KBM-7 (cell line): ENCODE measurements at regions of chr2 and their contacts with region 1.

Region 1: DNA sequence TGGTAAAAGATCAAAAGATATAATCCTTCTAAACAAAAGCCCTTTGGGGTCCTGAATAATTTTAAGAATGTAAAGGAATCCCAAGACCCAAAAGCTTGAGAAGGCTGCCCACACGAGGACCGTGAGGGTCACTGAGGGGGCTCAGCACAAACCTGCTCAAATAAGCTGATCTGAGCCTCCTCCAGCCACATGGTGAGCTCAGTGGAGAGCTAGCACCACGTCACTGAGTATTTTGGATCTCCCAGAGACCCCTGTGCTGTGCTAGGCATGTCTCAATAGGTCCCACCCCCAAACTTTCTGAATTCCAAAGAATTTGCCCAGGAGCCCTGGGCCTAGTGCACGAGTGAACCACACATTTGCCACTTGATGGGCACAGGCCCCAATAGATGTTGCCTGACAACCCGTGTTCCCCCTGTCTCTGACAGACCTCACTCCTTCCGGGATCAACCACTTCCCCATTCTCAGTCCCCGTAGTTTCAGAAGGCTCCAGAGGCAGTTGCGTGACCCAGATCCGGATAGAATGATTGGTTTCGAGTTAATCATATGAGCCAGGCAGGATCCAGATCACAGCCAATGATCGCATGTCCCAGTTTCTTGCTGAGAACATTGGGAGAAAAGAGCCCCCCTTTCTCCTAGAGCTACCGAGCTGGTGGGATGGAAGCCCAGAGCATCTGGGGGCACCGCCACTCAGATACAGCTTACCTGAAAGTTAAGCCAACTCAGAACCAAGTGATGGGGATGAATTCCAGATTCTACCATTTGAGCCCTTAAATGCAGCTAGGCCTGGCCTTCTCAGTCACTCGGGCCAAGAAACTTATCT is 203.8 kb downstream of the TNS1 start:
- DNase-seq: peak; percentile 92

Region 2: GRCh38 chr2:217851191-217852020 is 52.5 kb after region 1 on chr2:
- in situ Hi-C with region 1: no loop called
- DNase-seq: peak; percentile 57

Region 3: GRCh38 chr2:217899231-217900009 is 100.5 kb after region 1 on chr2:
- in situ Hi-C with region 1: loop called (anchors 10 kb)
- DNase-seq: peak; percentile 68

Region 4: GRCh38 chr2:218063486-218063885 is 264.5 kb after region 1 on chr2:
- in situ Hi-C with region 1: no loop called
- DNase-seq: no peak